ENCODE measurements at regions of chr16 and their contacts with region 1.

Region 1: DNA sequence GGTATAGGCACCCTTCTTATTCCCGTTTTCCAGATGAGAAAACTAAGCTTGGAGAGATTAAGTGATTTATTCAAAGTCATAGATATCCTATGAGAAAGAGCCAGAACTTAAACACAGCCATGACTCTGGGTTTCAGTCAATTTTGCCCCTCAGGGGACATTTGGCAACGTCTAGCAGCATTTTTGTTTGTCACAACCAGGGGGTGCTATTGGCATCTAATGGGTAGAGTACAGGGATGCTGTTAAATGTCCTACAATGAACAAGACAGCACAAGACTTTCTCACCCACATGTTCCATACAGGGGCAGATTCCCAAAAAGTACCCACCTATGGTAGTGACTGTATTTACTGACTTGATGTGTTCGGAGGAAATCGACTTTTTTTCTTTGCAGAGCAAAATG is 4.8 kb upstream of the SHISA9 start:
- DNase-seq: peak; percentile 21
- ATAC-seq: no peak
- H3K4me3 Mint-ChIP-seq: no peak overlapping the region
- H3K27ac Mint-ChIP-seq: no peak overlapping the region
- H3K4me1 Mint-ChIP-seq: no peaks in the 10 kb centered on the region
- H3K27me3 Mint-ChIP-seq: peaks cover 39% of the 10 kb centered on the region

Region 2: DNA sequence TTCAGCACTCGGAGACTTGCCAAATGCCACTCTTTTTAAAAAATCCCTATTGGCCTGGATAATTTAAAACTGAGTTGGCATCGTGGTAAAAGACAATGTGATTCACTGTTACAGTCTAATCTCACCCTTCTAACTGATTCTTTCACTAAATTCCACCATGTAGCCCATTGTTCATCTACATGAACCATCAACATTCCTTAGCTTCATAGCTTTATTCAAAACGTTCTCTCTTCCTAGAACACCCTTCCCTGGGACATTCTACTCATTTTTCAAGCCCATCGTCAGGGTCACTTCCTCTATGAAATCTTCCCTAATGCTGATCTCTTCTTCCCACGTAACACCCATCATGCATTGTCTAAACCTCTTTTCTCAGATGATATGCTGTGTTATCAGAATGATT is 10.8 kb before region 1 on chr16:
- CTCF ChIA-PET with region 1: interaction called, 10 read pairs
- POLR2A ChIA-PET with region 1: no interaction called
- DNase-seq: no peak
- ATAC-seq: no peak
- H3K4me3 Mint-ChIP-seq: no peak overlapping the region
- H3K27ac Mint-ChIP-seq: no peak overlapping the region
- H3K4me1 Mint-ChIP-seq: no peaks in the 10 kb centered on the region
- H3K27me3 Mint-ChIP-seq: peaks cover 6% of the 10 kb centered on the region